Head of caudate nucleus (tissue), 42 donors: ENCODE measurements at regions of chr4 and their contacts with region 1.

Region 1: DNA sequence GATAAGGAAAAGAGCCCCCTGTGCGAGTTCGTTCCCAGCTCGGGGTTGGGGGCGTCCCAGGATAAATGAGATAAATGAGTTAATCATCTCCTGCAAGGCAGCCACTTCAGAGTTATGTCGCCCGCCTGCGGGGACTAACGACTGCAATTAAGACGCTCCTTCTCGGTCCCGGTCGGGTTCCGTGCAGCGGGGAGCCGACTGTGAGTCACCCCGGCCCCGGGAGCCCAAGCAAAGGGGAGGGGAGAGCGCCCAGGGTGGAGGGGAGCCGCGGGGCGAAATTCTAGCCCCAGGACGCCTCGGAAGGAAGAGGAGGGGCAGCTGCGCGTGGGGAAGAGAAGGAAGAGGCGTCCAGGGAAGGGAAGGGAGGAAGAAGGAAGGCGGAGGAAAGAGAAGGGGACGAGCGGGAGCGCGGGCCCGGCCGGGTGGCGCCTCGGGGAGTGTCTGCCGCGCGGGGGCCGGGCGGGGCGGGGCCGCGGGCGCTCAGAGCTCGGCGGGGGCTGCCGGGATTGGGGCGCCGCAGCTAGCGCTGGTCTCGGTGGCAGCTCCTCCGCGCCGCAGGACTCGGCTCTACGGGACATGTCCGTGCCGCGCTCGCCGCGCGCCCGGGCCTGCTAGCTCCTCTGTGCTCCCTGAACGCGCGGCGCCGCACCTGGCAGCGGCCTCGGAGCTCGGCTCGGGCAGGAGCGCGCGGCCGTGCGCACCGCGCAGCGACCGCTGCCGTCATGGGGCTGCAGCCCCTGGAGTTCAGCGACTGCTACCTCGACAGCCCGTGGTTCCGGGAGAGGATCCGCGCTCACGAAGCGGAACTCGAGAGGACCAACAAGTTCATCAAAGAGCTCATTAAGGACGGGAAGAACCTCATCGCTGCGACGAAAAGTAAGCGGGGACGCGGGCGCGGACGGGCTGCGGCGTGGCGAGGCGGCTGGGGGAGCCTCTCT is at the start of gene ARHGAP10:
- DNase-seq: peak in 41 of 42 donors; percentile 33 to 81 (median 60)

Region 2: DNA sequence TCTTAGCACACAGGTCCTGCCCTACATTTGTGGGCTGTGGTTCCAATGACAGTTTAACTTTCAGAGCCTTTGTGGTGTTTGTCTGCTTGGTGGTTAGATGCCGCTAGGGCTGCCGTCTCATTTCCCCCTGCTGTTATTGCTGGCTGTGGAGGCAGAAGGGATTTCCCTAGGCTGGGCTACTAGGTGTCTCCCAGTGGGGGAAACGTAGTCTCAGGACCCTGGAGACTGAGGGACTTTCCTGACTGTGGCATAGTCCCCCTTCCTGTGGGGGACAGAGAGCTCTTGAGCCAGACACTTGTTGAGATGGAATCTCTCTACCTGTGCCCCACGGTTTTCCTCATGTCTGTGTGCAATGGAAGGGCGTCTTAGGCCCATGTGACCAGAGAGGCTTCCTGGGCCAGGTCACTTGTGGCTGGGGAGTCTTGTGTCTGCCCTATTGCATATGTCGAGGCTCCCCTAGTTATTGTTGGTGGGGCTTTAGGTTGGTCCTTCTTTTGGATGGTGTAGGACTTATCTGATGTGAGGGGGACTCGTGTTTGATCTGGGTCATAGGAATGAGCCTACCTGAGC is 68.2 kb after region 1 on chr4:
- intact Hi-C with region 1: loop called (anchors 10 kb)
- DNase-seq: no peak

Region 3: DNA sequence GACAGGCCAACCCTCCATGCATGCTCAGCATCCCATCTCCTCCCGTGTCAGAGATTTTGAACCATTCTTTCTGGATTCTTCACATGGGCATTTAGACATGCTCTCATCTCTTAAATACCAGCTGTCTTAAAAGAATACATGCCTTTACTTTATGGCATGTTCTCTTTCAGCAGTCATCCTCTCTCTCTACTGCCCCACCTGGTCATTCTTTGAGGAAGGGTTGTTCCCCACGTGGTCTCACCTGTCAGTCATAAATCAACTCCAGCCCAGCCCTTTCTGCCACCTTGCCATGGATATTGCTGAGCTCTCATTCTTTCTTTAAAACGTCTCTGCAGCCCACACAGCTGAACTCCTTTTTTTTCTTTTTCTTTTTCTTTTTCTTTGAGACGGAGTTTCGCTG is 111.3 kb after region 1 on chr4:
- intact Hi-C with region 1: loop called (anchors 10 kb)
- DNase-seq: no peak